ENCODE measurements at regions of chr1 and their contacts with region 1.

Region 1: GRCh38 chr1:109426278-109427170 is at the start of gene PSMA5:
- DNase-seq: peak; percentile 96
- H3K4me3 Mint-ChIP-seq: peak within 1 kb of the TSS; percentile 95
- H3K27ac Mint-ChIP-seq: peak within 1 kb of the TSS; percentile 97
- H3K4me1 Mint-ChIP-seq: peaks cover 28% of the 10 kb centered on the region
- H3K27me3 Mint-ChIP-seq: no peaks in the 10 kb centered on the region
- total RNA-seq, gene PSMA5: 257 and 281 TPM in 2 replicates

Region 2: DNA sequence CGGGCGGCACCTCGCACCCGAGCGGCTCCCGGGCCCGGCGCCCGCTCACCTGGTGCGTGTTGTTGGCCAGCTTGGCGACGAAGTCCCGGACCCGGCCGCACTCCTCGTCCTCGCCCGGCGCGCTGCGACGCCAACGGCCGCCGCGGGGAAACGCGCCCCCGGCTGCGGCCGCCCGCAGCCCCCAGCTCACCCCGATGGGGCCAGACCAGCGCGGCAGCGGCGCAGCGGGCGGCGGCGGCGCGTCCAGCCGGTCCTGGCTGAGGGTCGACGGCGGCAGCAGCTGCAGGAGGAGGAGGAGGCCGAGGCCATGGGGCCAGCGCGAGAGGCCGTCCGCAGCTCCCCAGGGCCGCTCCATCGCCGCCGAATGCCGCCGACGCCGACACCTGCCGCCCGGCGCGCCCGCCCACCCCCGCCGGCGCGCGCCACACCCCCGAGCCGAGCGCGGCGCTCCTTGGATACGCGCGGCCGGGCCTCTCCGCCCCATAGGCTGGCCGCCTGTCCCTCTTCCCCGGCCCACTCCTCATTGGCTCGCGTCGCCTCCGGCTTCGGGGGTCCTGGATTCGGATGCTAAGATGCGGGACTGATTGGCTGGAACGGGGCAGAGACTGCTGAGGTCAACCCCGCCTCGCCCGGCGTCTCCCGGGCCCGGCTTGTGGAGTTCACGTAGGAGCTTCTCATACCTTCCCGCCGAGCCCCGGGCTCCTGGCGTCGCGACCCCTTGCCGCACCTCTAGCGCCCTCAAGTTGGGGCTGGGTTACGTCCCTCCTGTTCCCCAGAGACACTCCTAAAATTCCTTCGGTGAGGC is 28.8 kb before region 1 on chr1 and contains the start of gene SORT1:
- intact Hi-C with region 1: loop called (anchors 2 kb)
- DNase-seq: peak; percentile 44
- H3K4me3 Mint-ChIP-seq: peak within 1 kb of the TSS; percentile 80
- H3K27ac Mint-ChIP-seq: no peak within 1 kb of the TSS
- H3K4me1 Mint-ChIP-seq: peaks cover 15% of the 10 kb centered on the region
- H3K27me3 Mint-ChIP-seq: peaks cover 40% of the 10 kb centered on the region
- total RNA-seq, gene SORT1: 1.1 and 1.9 TPM in 2 replicates

Region 3: DNA sequence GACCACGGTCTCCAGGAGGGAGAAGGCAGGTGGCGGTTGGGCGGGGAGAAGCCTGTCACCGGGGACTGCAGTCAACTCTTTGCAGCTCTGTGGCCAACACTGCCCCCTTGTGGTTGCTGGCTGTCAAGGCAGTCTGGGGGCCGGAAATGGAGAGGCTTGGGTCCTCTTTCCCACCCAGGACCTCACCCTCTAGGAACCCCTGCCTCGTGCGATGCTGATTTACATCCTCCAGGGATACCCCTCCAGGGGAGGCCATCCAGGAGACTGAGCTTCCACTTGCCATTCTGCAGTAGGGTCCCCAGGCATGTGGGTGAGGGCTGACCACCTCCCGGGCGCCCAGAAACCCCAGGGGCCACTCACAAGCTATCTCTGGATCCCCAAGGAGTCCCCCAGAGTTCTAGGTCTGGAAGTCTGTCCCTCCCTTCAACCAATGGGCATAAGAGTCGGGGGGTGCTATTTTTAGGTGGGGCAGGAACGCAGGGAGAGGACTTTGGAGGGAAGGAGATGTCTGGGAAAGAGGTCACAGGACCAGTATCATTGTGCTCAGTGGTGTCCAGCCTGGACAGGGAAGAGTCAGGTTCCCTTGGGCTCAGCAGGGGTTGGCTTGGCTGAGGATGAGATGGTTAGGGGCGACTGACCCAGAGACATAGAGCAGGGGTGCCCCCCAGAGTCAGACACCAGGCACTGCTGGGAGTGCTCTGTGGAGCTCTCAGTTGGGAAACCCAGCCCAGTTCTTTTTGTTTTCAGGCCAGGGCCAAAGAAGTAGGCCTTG is 106.0 kb after region 1 on chr1:
- intact Hi-C with region 1: loop called (anchors 1 kb)
- DNase-seq: peak; percentile 83
- H3K4me3 Mint-ChIP-seq: peak overlapping the region; percentile 32
- H3K27ac Mint-ChIP-seq: peak overlapping the region; percentile 80
- H3K4me1 Mint-ChIP-seq: peaks cover 19% of the 10 kb centered on the region
- H3K27me3 Mint-ChIP-seq: no peaks in the 10 kb centered on the region

Region 4: GRCh38 chr1:110034451-110035235 is 608.1 kb after region 1 on chr1 and contains the start of gene STRIP1:
- intact Hi-C with region 1: loop called (anchors 5 kb)
- DNase-seq: peak; percentile 92
- H3K4me3 Mint-ChIP-seq: peak within 1 kb of the TSS; percentile 90
- H3K27ac Mint-ChIP-seq: peak within 1 kb of the TSS; percentile 76
- H3K4me1 Mint-ChIP-seq: peaks cover 40% of the 10 kb centered on the region
- H3K27me3 Mint-ChIP-seq: no peaks in the 10 kb centered on the region
- total RNA-seq, gene STRIP1: 37.4 and 39.1 TPM in 2 replicates